Psoas muscle (tissue), 8 donors: ENCODE measurements at regions of chr10 and their contacts with region 1.

Region 1: GRCh38 chr10:99895867-99896266 is 113.4 kb downstream of the ABCC2 start:
- DNase-seq: no peak
- ATAC-seq: peak in 1 of 4 donors; percentile 33
- H3K4me3 ChIP-seq: no peak overlapping the region
- H3K27ac ChIP-seq: no peak overlapping the region
- H3K4me1 ChIP-seq: no peaks in the 10 kb centered on the region
- H3K27me3 ChIP-seq: no peaks in the 10 kb centered on the region
- CTCF ChIP-seq: no peak

Region 2: DNA sequence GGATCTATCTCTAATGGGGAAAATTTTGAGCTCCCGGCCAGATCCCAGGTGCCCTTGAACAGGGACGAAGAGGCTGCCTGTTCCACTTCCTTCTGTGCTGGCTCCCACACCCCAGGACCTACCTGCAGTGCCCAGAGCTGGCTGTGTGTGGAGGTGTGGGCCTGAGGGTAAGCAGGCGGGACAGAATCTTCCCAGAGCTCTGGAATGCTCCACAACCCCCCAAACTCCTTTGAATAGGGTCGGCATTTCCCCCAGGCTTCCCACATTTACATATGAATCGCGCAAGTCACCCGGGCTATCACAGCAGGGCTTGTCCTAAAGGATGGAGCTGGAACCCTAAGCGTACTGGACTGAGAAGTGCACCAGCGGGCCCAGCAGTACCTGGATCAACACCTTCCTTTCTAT is 18.0 kb after region 1 on chr10:
- intact Hi-C with region 1: loop called in 1 of 2 experiments (anchors 1 kb)
- DNase-seq: no peak
- ATAC-seq: no peak
- H3K4me3 ChIP-seq: no peak overlapping the region
- H3K27ac ChIP-seq: no peak overlapping the region
- H3K4me1 ChIP-seq: peaks cover 10% of the 10 kb centered on the region
- H3K27me3 ChIP-seq: no peaks in the 10 kb centered on the region
- CTCF ChIP-seq: no peak